Sciatic nerve (tissue), 2 donors: ENCODE measurements at regions of chr13 and their contacts with region 1.

Region 1: GRCh38 chr13:62595976-62596375 is 1180.3 kb upstream of the PCDH20 start:
- DNase-seq: no peak
- ATAC-seq: no peak

Region 2: GRCh38 chr13:60850526-60850925 is 1745.5 kb before region 1 on chr13:
- intact Hi-C with region 1: loop called (anchors 10 kb)
- DNase-seq: no peak
- ATAC-seq: no peak

Region 3: GRCh38 chr13:62407871-62408270 is 188.1 kb before region 1 on chr13:
- intact Hi-C with region 1: no loop called
- DNase-seq: no peak
- ATAC-seq: no peak